AG04449 (cell line): ENCODE measurements at regions of chr10 and their contacts with region 1.

Region 1: DNA sequence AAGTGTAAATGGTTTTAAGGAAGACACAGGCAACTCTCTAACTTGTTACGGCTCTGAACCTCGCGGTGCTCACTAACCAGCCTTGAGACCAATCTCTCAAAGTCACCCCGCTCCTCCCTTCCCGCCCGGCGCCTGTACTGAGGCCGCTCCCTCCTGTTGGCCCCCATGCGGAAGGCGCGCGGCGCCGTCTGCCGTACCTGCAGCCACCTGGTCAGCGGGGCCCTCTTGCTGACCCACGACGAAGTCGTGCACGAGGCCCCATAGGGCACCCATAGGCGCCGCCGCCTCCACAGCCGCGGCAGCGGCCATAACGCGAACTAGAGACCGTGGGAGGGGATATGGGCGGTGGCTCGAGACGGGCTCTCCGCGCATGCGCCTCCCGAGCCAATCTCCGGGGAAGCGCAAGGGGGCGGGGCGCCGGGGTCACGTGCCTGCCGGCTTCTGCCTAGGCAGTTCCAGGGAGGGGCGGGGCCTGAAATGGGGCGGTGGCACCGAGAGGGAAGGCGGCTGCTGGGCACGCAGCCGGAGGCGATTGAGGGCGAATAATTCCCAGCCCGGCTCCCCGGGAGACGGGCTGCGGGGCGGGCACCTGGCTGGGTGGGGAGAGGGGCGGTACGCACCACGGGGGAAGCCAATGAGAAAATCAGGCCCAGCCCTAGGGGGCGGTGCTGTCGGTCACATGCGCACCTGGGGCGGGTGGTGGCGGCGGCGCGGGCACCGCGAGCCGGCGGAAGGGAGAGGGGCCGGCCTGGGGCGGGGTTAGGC is at the start of gene MMS19:
- DNase-seq: peak; percentile 83
- H3K4me3 ChIP-seq: peak within 1 kb of the TSS; percentile 99
- CTCF ChIP-seq: no peak

Region 2: DNA sequence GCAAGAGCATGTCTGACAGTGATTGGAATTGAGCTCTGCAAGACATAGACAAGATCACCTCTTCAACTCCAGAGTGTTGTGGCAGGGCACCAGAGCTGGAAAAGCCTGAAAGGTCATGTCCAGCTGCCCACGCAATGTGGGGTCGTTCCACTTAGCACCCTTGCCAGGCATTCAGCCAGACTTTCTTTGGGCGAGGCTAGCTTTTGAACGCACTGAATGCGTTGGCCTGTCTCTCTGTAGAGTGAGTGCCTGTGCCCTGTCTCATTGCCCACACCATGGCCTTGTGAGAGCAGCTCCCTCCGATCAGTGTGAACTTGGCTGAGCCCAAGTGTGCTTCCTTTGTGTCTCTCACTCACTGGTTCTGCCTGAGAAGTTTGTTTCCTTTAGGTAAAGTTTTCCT is 23.8 kb after region 1 on chr10:
- CTCF ChIA-PET with region 1: no interaction called
- POLR2A ChIA-PET with region 1: no interaction called
- DNase-seq: no peak
- H3K4me3 ChIP-seq: no peak overlapping the region
- CTCF ChIP-seq: no peak

Region 3: DNA sequence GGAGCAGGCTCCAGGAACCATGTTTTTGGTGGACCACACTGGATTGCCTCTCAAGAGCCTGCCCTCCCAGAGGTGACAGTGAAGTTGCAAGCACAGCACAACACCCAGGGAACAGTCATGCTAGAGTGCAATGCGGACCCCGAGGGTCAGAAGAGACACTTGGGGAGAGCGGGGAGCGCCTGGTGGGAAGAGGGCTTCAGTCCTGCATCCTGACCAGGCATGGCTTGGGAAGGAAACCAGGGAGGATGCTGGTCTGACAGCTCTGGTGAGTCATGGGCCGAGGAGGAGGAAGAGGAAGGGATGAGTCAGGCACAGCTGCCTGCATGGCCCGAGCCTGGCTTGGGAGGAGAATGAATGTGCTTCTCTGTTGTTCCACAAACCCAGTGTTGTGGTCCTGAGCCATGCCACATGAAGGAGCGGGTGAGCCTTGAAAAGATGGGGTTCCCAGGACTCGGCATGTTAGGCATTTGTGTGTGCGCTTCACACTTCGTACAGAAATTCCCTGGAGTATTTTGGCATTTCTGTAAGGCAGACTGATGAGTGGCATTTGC is 44.8 kb after region 1 on chr10:
- CTCF ChIA-PET with region 1: interaction called, 14 read pairs
- POLR2A ChIA-PET with region 1: interaction called, 15 read pairs
- DNase-seq: peak; percentile 83
- H3K4me3 ChIP-seq: peak overlapping the region; percentile 8; the same call in 1 of the 2 replicates
- CTCF ChIP-seq: no peak